Uterus (tissue), 4 donors: ENCODE measurements at regions of chr18 and their contacts with region 1.

Region 1: DNA sequence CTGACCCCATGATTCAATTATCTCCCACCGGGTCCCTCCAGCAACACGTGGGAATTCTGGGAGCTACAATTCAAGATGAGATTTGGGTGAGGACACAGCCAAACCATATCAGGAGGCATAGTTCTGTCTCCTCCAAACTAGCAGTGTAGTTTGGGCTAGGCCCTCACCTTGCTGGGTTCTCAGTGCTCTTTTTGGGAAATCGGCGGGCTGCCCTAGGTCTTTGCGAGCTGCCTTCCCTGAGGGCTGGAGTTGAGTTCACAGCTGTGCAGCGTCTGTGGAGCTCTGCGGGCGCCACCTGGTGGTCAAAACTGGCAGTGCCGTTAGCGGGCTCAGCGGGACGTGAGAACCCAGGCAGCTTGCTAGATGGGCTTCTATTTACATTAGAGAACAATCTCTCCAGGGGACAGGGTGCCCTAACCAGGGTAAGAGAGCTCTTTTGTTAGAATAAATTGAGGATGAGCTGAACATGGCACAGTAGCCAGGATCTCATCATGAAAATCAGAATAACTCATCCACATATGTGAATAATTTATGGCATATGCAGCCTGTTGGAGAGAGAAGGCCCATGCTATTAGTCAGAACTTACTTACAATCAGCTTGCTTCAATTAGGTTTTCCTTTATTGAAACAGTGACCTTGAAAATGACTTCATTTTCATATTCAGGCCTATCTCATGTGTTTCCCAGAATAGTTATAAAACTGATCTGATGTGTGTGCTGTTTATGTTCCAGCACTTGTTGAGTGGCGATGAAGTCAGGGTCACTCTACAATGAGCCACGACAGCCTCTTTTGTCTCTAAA is 27.4 kb upstream of the YES1 start:
- DNase-seq: peak; percentile 85
- H3K4me3 ChIP-seq: no peak overlapping the region
- H3K27ac ChIP-seq: no peak overlapping the region
- H3K4me1 ChIP-seq: no peaks in the 10 kb centered on the region
- H3K27me3 ChIP-seq: no peaks in the 10 kb centered on the region
- CTCF ChIP-seq: peak; percentile 86 to 98 (median 92)
- POLR2A ChIP-seq: no peak

Region 2: DNA sequence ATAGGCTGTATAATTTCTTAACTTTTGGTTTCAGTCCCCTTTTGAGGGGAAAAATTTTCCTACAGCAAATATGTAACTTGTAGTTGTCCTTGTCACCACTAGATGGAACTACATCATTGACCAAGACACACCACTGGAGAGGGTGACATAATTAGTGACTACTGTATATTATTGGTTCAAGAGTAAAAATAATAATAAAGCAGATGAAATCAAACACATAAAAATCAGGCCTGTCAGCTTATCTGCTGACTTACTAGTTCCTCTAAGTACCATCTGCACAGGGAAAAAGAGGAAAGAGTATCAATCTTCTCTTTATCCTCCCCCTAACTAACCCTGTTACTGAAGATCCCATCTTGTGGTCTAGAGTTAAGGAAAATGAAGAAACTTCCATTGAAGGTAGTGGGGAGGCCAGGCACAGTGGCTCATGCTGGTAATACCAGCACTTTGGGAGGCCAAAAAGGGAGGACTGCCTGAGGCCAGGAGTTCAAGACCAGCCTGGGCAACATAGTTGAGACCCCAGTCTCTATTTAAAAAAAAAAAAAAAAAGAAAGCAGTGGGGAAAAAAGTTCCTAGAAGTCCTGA is 97.4 kb before region 1 on chr18:
- intact Hi-C with region 1: loop called (anchors 5 kb)
- DNase-seq: no peak
- H3K4me3 ChIP-seq: no peak overlapping the region
- H3K27ac ChIP-seq: no peak overlapping the region
- H3K4me1 ChIP-seq: no peaks in the 10 kb centered on the region
- H3K27me3 ChIP-seq: no peaks in the 10 kb centered on the region
- CTCF ChIP-seq: peak; percentile 63 to 81 (median 74)
- POLR2A ChIP-seq: no peak

Region 3: GRCh38 chr18:907885-908757 is 68.7 kb after region 1 on chr18:
- intact Hi-C with region 1: no loop called
- DNase-seq: no peak
- H3K4me3 ChIP-seq: peak overlapping the region in 1 of 2 donors; percentile 20
- H3K27ac ChIP-seq: no peak overlapping the region
- H3K4me1 ChIP-seq: peaks cover 0 to 11% of the 10 kb centered on the region in 2 donors
- H3K27me3 ChIP-seq: peaks cover 24 to 58% of the 10 kb centered on the region in 2 donors
- CTCF ChIP-seq: no peak
- POLR2A ChIP-seq: no peak